ENCODE measurements at regions of chr6 and their contacts with region 1.

Region 1: GRCh38 chr6:2634139-2634964 is 116.4 kb downstream of the MYLK4 start:
- DNase-seq: peak; percentile 85
- ATAC-seq: peak; percentile 99
- H3K4me3 Mint-ChIP-seq: peak overlapping the region; percentile 55
- H3K27ac Mint-ChIP-seq: no peak overlapping the region
- H3K4me1 Mint-ChIP-seq: peaks cover 4% of the 10 kb centered on the region
- H3K27me3 Mint-ChIP-seq: peaks cover 17% of the 10 kb centered on the region

Region 2: GRCh38 chr6:2209226-2209809 is 425.0 kb before region 1 on chr6:
- CTCF ChIA-PET with region 1: interaction called, 53 read pairs
- POLR2A ChIA-PET with region 1: no interaction called
- DNase-seq: peak; percentile 58
- ATAC-seq: peak; percentile 82
- H3K4me3 Mint-ChIP-seq: no peak overlapping the region
- H3K27ac Mint-ChIP-seq: no peak overlapping the region
- H3K4me1 Mint-ChIP-seq: no peaks in the 10 kb centered on the region
- H3K27me3 Mint-ChIP-seq: peaks cover 1% of the 10 kb centered on the region

Region 3: DNA sequence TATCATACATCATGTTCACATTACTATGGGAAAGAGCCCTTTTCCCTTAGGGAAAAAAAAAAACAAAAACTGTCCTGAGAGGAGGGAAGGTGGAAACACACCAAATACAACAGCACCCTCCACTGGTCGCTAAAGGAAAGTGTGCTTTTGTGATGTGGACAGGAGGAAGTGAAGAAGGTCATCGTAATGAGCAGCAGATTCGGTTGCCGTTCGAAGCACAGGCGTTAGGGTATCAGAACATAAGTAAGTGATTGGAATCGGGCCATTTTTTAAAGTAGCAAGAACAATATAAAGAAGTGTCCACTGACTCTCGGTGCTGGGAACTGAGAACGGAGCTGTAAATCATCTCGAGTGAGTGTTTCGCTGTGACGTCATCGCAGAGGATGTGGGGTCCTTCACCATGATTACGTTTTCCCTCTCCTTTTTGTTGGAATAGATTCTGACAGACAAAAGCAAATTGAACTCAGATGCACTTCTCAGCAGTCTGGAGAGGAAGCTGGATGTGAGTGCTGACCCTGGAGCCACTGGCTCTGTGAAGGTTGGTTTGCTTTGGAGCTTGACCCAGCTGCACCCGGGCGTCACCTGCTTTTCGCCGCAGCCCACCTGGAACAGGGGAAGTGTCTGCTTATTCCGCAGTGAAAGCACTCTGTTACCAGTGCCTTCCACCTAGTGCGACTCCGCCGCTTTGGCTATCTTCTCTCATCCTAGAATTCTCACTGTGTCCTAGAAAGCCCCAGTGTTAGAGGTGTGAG is 185.4 kb before region 1 on chr6:
- CTCF ChIA-PET with region 1: interaction called, 20 read pairs
- POLR2A ChIA-PET with region 1: no interaction called
- DNase-seq: peak; percentile 26
- ATAC-seq: peak; percentile 61
- H3K4me3 Mint-ChIP-seq: peak overlapping the region; percentile 8
- H3K27ac Mint-ChIP-seq: no peak overlapping the region
- H3K4me1 Mint-ChIP-seq: peaks cover 3% of the 10 kb centered on the region
- H3K27me3 Mint-ChIP-seq: peaks cover 18% of the 10 kb centered on the region

Region 4: DNA sequence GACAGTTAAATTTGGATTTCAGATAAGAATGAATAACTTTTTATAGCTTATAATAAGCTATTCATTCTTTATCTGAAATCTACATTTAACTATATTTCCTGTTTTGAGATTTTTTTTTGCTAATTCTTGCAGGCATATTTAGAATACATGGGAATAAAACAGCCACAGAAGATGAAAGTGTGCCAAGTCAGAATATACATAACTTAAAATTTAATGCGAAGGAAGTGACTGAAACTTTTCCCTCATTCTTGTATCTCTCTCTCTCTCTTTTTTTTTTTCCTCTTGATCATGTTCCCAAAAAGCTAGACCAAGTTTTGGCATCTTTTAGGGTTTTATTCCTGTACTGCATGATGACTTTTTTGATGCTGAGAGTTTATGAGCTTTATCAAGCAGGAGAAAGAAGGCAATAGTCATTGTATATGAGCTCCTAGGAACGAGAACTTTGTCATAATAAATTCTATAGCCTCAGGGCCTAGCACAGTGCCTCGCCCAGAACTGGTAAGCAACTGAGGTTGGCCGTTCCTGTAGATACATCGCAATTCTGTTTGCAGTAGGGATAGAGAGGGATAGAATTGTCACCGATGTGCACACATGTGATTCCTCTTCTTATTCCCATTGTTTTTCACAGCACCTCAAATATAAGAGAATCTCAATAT is 88.8 kb before region 1 on chr6:
- CTCF ChIA-PET with region 1: interaction called, 12 read pairs
- POLR2A ChIA-PET with region 1: no interaction called
- DNase-seq: no peak
- ATAC-seq: no peak
- H3K4me3 Mint-ChIP-seq: no peak overlapping the region
- H3K27ac Mint-ChIP-seq: no peak overlapping the region
- H3K4me1 Mint-ChIP-seq: peaks cover 20% of the 10 kb centered on the region
- H3K27me3 Mint-ChIP-seq: peaks cover 77% of the 10 kb centered on the region

Region 5: DNA sequence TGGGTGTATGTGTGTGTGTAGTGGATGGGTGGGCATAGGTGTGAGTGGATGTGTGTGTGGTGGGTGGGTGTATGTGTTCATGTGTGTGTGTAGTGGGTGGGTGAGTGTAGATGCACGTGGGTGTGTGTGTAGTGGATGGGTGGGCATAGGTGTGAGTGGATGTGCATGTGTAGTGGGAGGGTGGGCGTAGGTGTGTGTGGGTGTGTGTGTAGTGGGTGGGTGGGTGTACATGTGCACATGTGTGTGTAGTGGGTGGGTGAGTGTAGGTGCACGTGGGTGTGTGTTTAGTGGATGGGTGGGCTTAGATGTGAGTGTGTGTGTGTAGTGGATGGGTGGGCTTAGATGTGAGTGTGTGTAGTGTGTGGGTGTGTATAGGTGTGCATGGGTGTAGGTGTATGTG is 12.0 kb after region 1 on chr6:
- CTCF ChIA-PET with region 1: interaction called, 22 read pairs
- POLR2A ChIA-PET with region 1: no interaction called
- DNase-seq: no peak
- ATAC-seq: no peak
- H3K4me3 Mint-ChIP-seq: no peak overlapping the region
- H3K27ac Mint-ChIP-seq: no peak overlapping the region
- H3K4me1 Mint-ChIP-seq: peaks cover 2% of the 10 kb centered on the region
- H3K27me3 Mint-ChIP-seq: peaks cover 45% of the 10 kb centered on the region

Measured in activated CD8-positive, alpha-beta T cell treated with anti-CD3 and anti-CD28 coated beads, Interleukin-2, amount 10 ng/mL, durations not matched to agents 7 days and 5 days (primary cell).